Activated CD8-positive, alpha-beta T cell treated with anti-CD3 and anti-CD28 coated beads, Interleukin-2, amount 10 ng/mL, durations not matched to agents 7 days and 5 days (primary cell): ENCODE measurements at regions of chr19 and their contacts with region 1.

Region 1: GRCh38 chr19:10717356-10718204 is at the start of gene DNM2:
- DNase-seq: peak; percentile 98
- ATAC-seq: peak; percentile 95
- H3K4me3 Mint-ChIP-seq: peak within 1 kb of the TSS; percentile 96
- H3K27ac Mint-ChIP-seq: peak within 1 kb of the TSS; percentile 88
- H3K4me1 Mint-ChIP-seq: peaks cover 32% of the 10 kb centered on the region
- H3K27me3 Mint-ChIP-seq: no peaks in the 10 kb centered on the region
- total RNA-seq, gene DNM2: 239 to 240 TPM

Region 2: DNA sequence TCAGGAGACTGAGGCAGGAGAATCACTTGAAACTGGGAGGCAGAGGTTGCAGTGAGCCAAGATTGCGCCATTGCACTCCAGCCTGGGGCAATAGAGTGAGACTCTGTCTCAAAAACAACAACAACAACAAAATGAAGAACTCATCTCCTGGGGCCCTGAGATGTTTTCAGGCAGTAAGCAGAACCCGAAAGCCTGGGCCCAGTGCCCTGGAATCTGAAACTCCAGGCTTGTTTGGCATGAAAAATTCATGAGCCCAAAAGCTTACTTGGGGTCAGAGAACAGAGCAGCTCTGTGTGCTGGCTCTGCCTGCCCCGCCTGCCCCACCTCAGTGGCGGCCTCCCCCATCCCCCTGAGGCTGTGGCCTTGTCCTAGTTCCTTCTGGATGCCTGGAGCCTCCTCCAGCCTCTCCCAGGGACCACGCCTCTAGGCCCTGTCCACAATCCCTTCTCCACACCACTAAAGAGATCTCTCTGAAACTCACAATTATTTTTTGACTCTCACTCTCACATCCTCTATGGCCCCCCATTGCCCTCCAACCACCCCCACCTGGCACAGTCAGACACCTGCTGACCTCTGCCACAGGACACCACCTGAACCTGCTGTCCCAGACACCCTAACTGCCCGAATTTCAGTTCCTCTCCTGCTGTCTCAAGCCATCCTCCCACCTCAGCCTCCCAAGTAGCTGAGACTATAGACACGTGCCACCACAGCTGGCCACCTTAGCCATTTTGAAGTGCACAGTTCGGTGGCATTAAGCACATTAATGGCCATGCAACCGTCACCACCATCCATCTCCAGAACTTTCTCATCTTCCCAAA is 123.6 kb before region 1 on chr19:
- CTCF ChIA-PET with region 1: no interaction called
- POLR2A ChIA-PET with region 1: no interaction called
- DNase-seq: no peak
- ATAC-seq: no peak
- H3K4me3 Mint-ChIP-seq: no peak overlapping the region
- H3K27ac Mint-ChIP-seq: peak overlapping the region; percentile 76
- H3K4me1 Mint-ChIP-seq: peaks cover 25% of the 10 kb centered on the region
- H3K27me3 Mint-ChIP-seq: peaks cover 2% of the 10 kb centered on the region

Region 3: GRCh38 chr19:10670182-10670581 is 47.4 kb before region 1 on chr19:
- CTCF ChIA-PET with region 1: no interaction called
- POLR2A ChIA-PET with region 1: no interaction called
- DNase-seq: no peak
- ATAC-seq: no peak
- H3K4me3 Mint-ChIP-seq: no peak overlapping the region
- H3K27ac Mint-ChIP-seq: no peak overlapping the region
- H3K4me1 Mint-ChIP-seq: peaks cover 24% of the 10 kb centered on the region
- H3K27me3 Mint-ChIP-seq: no peaks in the 10 kb centered on the region

Region 4: GRCh38 chr19:10695401-10696398 is 21.9 kb before region 1 on chr19:
- CTCF ChIA-PET with region 1: interaction called, 60 read pairs
- POLR2A ChIA-PET with region 1: interaction called, 4 read pairs
- DNase-seq: peak; percentile 94
- ATAC-seq: peak; percentile 96
- H3K4me3 Mint-ChIP-seq: peak overlapping the region; percentile 69
- H3K27ac Mint-ChIP-seq: no peak overlapping the region
- H3K4me1 Mint-ChIP-seq: peaks cover 17% of the 10 kb centered on the region
- H3K27me3 Mint-ChIP-seq: peaks cover 9% of the 10 kb centered on the region

Region 5: GRCh38 chr19:10760273-10760944 is 42.8 kb after region 1 on chr19:
- CTCF ChIA-PET with region 1: interaction called, 39 read pairs
- POLR2A ChIA-PET with region 1: interaction called, 26 read pairs
- DNase-seq: peak; percentile 32
- ATAC-seq: no peak
- H3K4me3 Mint-ChIP-seq: peak overlapping the region; percentile 65
- H3K27ac Mint-ChIP-seq: peak overlapping the region; percentile 90
- H3K4me1 Mint-ChIP-seq: peaks cover 89% of the 10 kb centered on the region
- H3K27me3 Mint-ChIP-seq: no peaks in the 10 kb centered on the region

Region 6: GRCh38 chr19:10797541-10798256 is 80.1 kb after region 1 on chr19:
- CTCF ChIA-PET with region 1: interaction called, 12 read pairs
- POLR2A ChIA-PET with region 1: no interaction called
- DNase-seq: peak; percentile 88
- ATAC-seq: peak; percentile 88
- H3K4me3 Mint-ChIP-seq: peak overlapping the region; percentile 58
- H3K27ac Mint-ChIP-seq: peak overlapping the region; percentile 80
- H3K4me1 Mint-ChIP-seq: peaks cover 31% of the 10 kb centered on the region
- H3K27me3 Mint-ChIP-seq: no peaks in the 10 kb centered on the region

Region 7: GRCh38 chr19:10828981-10829821 is 111.6 kb after region 1 on chr19:
- CTCF ChIA-PET with region 1: interaction called, 15 read pairs
- POLR2A ChIA-PET with region 1: no interaction called
- DNase-seq: no peak
- ATAC-seq: peak; percentile 40
- H3K4me3 Mint-ChIP-seq: no peak overlapping the region
- H3K27ac Mint-ChIP-seq: no peak overlapping the region
- H3K4me1 Mint-ChIP-seq: peaks cover 2% of the 10 kb centered on the region
- H3K27me3 Mint-ChIP-seq: no peaks in the 10 kb centered on the region

Region 8: DNA sequence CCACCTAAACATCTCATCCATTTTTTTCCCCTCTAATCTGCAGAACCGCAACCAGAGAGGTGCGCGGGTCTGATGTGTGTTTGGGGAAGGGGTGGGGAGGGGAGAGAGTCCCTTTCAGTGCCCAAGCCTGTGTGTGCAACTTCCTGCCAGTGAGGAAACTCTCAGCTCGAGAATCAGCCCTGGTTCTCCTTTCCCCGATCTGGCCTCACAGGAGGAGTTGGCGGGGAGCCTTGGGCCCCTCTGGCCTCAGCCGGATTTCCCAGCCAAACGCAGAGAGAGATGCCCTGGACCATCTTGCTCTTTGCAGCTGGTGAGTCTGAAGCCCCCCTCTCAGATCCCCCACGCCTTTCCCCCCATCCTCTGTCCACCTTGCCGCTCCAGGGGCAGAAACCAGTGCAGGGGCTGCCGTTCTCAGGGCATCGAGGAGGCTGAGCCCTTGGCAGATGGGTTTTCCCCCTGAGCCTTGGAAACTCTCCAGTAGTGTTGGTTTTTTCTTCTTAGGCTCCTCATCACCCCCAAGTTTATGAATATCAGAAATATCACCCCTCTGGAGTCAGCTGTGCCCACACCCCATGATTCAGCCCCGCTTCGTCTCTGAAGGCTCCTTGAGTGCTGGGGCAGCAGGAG is 130.8 kb after region 1 on chr19 and contains the start of gene C19orf38:
- CTCF ChIA-PET with region 1: interaction called, 23 read pairs
- POLR2A ChIA-PET with region 1: no interaction called
- DNase-seq: peak; percentile 27
- ATAC-seq: peak; percentile 48
- H3K4me3 Mint-ChIP-seq: peak within 1 kb of the TSS; percentile 35
- H3K27ac Mint-ChIP-seq: peak within 1 kb of the TSS; percentile 57
- H3K4me1 Mint-ChIP-seq: peaks cover 23% of the 10 kb centered on the region
- H3K27me3 Mint-ChIP-seq: peaks cover 3% of the 10 kb centered on the region
- total RNA-seq, gene C19orf38: 1.1 to 2.2 TPM

Region 9: GRCh38 chr19:10864538-10864899 is 146.9 kb after region 1 on chr19:
- CTCF ChIA-PET with region 1: interaction called, 195 read pairs
- POLR2A ChIA-PET with region 1: interaction called, 10 read pairs
- DNase-seq: peak; percentile 87
- ATAC-seq: peak; percentile 90
- H3K4me3 Mint-ChIP-seq: no peak overlapping the region
- H3K27ac Mint-ChIP-seq: no peak overlapping the region
- H3K4me1 Mint-ChIP-seq: peaks cover 21% of the 10 kb centered on the region
- H3K27me3 Mint-ChIP-seq: no peaks in the 10 kb centered on the region